Naive thymus-derived CD8-positive, alpha-beta T cell (primary cell): ENCODE measurements at regions of chr15 and their contacts with region 1.

Region 1: DNA sequence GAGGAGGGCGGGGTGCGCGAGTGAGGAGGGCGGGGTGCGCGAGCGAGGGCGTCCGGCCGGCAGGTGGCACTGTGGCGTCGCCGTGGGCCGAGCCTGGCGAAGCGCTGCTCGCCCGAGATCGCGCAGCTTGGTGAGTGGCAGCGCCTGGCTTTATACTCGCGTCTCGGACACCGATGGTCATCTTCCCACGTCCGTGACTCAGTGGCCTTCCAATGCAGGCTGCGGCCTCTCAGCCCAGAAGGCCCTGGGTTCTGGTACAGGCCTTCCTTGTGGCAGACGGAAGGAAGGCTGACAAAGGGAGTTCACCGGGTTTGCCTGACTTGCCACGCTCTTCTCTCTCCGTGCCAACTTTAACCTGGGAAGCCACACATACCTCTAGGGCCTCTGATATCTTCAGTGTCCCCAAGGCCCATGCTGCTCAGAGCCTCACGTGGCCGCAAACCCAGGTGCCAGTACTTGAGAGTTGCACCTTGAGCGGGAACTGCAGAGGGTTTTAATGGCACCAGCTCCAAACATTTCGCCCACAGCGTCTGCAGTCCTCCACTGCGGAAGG is 195.3 kb upstream of the LYSMD4 start:
- DNase-seq: peak; percentile 74 to 91 (median 88)
- ATAC-seq: peak; percentile 89 to 90
- H3K4me3 Mint-ChIP-seq: peak overlapping the region; percentile 76 to 92 (median 86)
- H3K27ac Mint-ChIP-seq: peak overlapping the region; percentile 71 to 97 (median 92)
- H3K4me1 Mint-ChIP-seq: peaks cover 5 to 21% (median 19%) of the 10 kb centered on the region in 4 donors
- H3K27me3 Mint-ChIP-seq: peaks cover 0 to 8% (median 1%) of the 10 kb centered on the region in 5 donors

Region 2: GRCh38 chr15:100338971-100339444 is 410.5 kb after region 1 on chr15:
- POLR2A ChIA-PET with region 1: interaction called, 20 read pairs
- DNase-seq: peak; percentile 27 to 86 (median 73)
- ATAC-seq: peak; percentile 58 to 64
- H3K4me3 Mint-ChIP-seq: peak overlapping the region; percentile 50 to 86 (median 83)
- H3K27ac Mint-ChIP-seq: peak overlapping the region in 9 of 10 donors; percentile 7 to 75 (median 56)
- H3K4me1 Mint-ChIP-seq: peaks cover 22 to 50% (median 42%) of the 10 kb centered on the region in 4 donors
- H3K27me3 Mint-ChIP-seq: peaks cover 2 to 27% (median 5%) of the 10 kb centered on the region in 5 donors